ENCODE measurements at regions of chrX and their contacts with region 1.

Region 1: GRCh38 chrX:46180258-46180687 is 364.9 kb downstream of the ZNF674 start:
- DNase-seq: no peak
- ATAC-seq: no peak
- H3K4me3 ChIP-seq: no peak overlapping the region
- H3K27ac ChIP-seq: no peak overlapping the region
- H3K4me1 ChIP-seq: no peaks in the 10 kb centered on the region
- H3K27me3 ChIP-seq: peaks cover 0 to 3% (median 0%) of the 10 kb centered on the region in 9 donors
- CTCF ChIP-seq: no peak
- POLR2A ChIP-seq: no peak

Region 2: DNA sequence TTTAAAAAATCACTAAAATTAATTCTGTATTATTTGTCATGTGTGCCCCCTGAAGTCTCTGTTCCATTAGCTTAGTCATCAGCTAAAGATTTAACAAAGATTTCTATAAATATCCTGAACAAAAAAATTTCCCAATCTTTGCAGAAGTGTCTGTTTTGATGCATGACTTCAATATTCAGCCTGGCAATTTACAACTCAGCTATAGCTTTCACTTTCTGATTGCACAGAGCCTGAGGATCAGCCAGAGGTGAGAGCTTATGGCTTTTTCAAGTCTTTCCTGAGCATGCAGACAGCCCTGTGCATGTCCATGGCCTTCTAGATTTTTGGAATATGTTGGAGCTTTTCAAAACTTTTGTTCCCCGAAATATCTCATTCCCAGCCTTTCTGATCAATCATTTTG is 55.2 kb before region 1 on chrX:
- intact Hi-C with region 1: loop called in 1 of 10 experiments (anchors 10 kb)
- DNase-seq: no peak
- ATAC-seq: no peak
- H3K4me3 ChIP-seq: no peak overlapping the region
- H3K27ac ChIP-seq: no peak overlapping the region
- H3K4me1 ChIP-seq: no peaks in the 10 kb centered on the region
- H3K27me3 ChIP-seq: peaks cover 0 to 14% (median 0%) of the 10 kb centered on the region in 9 donors
- CTCF ChIP-seq: no peak
- POLR2A ChIP-seq: no peak

Region 3: DNA sequence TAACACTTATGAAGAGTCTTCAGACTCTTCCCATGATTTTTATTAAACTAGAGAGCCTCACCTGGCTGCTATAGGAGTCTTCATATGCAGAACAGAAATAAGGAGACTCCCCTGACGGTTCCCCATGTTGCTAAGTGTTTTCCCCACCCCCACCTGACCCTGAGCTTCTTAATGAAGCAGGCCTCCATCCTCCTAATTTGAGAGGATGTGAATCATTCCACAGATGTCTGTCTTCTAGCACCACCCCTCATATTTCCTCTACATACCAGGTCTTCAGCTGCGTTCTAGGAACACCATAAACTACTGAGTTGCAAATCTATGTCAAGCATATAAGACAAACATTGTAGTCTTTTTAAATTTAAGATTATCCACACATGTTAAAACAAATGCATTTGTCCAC is 693.5 kb after region 1 on chrX:
- intact Hi-C with region 1: no loop called
- DNase-seq: no peak
- ATAC-seq: no peak
- H3K4me3 ChIP-seq: no peak overlapping the region
- H3K27ac ChIP-seq: no peak overlapping the region
- H3K4me1 ChIP-seq: no peaks in the 10 kb centered on the region
- H3K27me3 ChIP-seq: peaks cover 0 to 15% (median 0%) of the 10 kb centered on the region in 9 donors
- CTCF ChIP-seq: no peak
- POLR2A ChIP-seq: no peak

Region 4: GRCh38 chrX:46929439-46930261 is 749.4 kb after region 1 on chrX:
- intact Hi-C with region 1: no loop called
- DNase-seq: no peak
- ATAC-seq: no peak
- H3K4me3 ChIP-seq: no peak overlapping the region
- H3K27ac ChIP-seq: no peak overlapping the region
- H3K4me1 ChIP-seq: no peaks in the 10 kb centered on the region
- H3K27me3 ChIP-seq: peaks cover 0 to 17% (median 0%) of the 10 kb centered on the region in 9 donors
- CTCF ChIP-seq: no peak
- POLR2A ChIP-seq: no peak

Measured in heart left ventricle (tissue), 16 donors.